Naive thymus-derived CD4-positive, alpha-beta T cell (primary cell): ENCODE measurements at regions of chr1 and their contacts with region 1.

Region 1: DNA sequence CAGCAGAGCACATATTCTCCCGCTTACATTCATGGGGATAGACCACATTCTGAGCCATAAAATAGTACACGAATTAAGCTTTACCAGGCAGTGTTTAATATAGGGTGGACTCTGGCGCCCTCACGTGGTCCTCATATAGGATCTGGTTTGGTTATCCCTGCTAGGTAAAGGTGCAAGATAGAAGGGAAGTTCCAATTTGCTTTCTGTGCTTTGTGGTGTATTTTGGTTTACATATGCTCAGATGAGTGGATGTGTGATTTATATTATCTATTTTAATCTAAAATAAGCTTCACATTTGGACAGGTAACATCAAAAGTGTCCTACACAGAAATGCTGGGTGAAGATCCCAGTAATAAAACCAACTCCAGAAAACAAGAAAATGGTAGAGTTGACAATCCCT is 3.6 kb downstream of the CR1 start:
- DNase-seq: peak; percentile 29 to 78 (median 65)
- ATAC-seq: peak; percentile 79
- H3K4me3 ChIP-seq: no peak overlapping the region
- H3K4me3 Mint-ChIP-seq: no peak overlapping the region
- H3K27ac ChIP-seq: no peak overlapping the region
- H3K27ac Mint-ChIP-seq: peak overlapping the region in 1 of 9 donors; percentile 59
- H3K4me1 ChIP-seq: peaks cover 0 to 6% of the 10 kb centered on the region in 2 donors
- H3K4me1 Mint-ChIP-seq: peaks cover 6 to 17% (median 11%) of the 10 kb centered on the region in 7 donors
- H3K27me3 ChIP-seq: no peaks in the 10 kb centered on the region
- H3K27me3 Mint-ChIP-seq: peaks cover 5 to 60% (median 23%) of the 10 kb centered on the region in 5 donors

Region 2: GRCh38 chr1:206635080-206635977 is 864.2 kb before region 1 on chr1 and contains the start of gene DYRK3:
- CTCF ChIA-PET with region 1: no interaction called
- POLR2A ChIA-PET with region 1: no interaction called
- intact Hi-C with region 1: loop called in 1 of 2 experiments (anchors 1 kb)
- DNase-seq: peak; percentile 71 to 98 (median 80)
- ATAC-seq: peak; percentile 97
- H3K4me3 ChIP-seq: peak within 1 kb of the TSS; percentile 67
- H3K4me3 Mint-ChIP-seq: peak within 1 kb of the TSS; percentile 85 to 96 (median 90)
- H3K27ac ChIP-seq: peak within 1 kb of the TSS; percentile 57
- H3K27ac Mint-ChIP-seq: peak within 1 kb of the TSS; percentile 64 to 93 (median 85)
- H3K4me1 ChIP-seq: peaks cover 8 to 16% of the 10 kb centered on the region in 2 donors
- H3K4me1 Mint-ChIP-seq: peaks cover 14 to 29% (median 18%) of the 10 kb centered on the region in 7 donors
- H3K27me3 ChIP-seq: no peaks in the 10 kb centered on the region
- H3K27me3 Mint-ChIP-seq: peaks cover 7 to 13% (median 9%) of the 10 kb centered on the region in 5 donors
- total RNA-seq, gene DYRK3: 0.22 to 8.2 (median 0.69) TPM

Region 3: GRCh38 chr1:207077470-207078377 is 421.8 kb before region 1 on chr1:
- CTCF ChIA-PET with region 1: interaction called, 26 read pairs
- POLR2A ChIA-PET with region 1: no interaction called
- intact Hi-C with region 1: loop called in 1 of 2 experiments (anchors 2 kb)
- DNase-seq: peak; percentile 21 to 85 (median 78)
- ATAC-seq: peak; percentile 98
- H3K4me3 ChIP-seq: no peak overlapping the region
- H3K4me3 Mint-ChIP-seq: no peak overlapping the region
- H3K27ac ChIP-seq: no peak overlapping the region
- H3K27ac Mint-ChIP-seq: peak overlapping the region in 3 of 9 donors; percentile 5 to 63 (median 28)
- H3K4me1 ChIP-seq: no peaks in the 10 kb centered on the region
- H3K4me1 Mint-ChIP-seq: peaks cover 0 to 14% (median 5%) of the 10 kb centered on the region in 7 donors
- H3K27me3 ChIP-seq: no peaks in the 10 kb centered on the region
- H3K27me3 Mint-ChIP-seq: peaks cover 0 to 52% (median 0%) of the 10 kb centered on the region in 5 donors

Region 4: DNA sequence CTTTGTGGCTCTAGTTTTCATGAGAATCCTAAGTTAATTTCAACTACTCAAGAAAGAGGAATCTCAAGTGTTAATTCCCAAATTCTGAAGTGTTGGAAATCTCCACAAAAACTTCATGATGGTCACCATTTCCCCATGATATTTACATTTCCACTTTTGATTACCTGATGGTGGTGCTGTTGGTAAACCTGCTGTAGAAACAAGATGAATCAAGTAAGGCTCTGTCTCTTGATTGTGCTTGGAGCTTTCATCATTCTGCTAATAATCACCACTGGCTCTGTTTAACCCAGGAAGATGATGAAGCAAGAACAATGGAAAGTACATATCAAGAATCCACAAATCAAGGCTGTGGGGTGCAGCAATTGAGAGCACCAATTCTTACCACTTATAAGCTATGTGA is 317.7 kb before region 1 on chr1:
- CTCF ChIA-PET with region 1: interaction called, 3 read pairs
- POLR2A ChIA-PET with region 1: no interaction called
- intact Hi-C with region 1: loop called (anchors 1 to 2 kb)
- DNase-seq: peak in 5 of 9 donors; percentile 5 to 35 (median 10)
- ATAC-seq: no peak
- H3K4me3 ChIP-seq: no peak overlapping the region
- H3K4me3 Mint-ChIP-seq: no peak overlapping the region
- H3K27ac ChIP-seq: no peak overlapping the region
- H3K27ac Mint-ChIP-seq: no peak overlapping the region
- H3K4me1 ChIP-seq: no peaks in the 10 kb centered on the region
- H3K4me1 Mint-ChIP-seq: peaks cover 0 to 5% (median 0%) of the 10 kb centered on the region in 7 donors
- H3K27me3 ChIP-seq: no peaks in the 10 kb centered on the region
- H3K27me3 Mint-ChIP-seq: peaks cover 0 to 39% (median 9%) of the 10 kb centered on the region in 5 donors

Region 5: GRCh38 chr1:207404849-207405525 is 94.6 kb before region 1 on chr1:
- CTCF ChIA-PET with region 1: interaction called, 39 read pairs
- POLR2A ChIA-PET with region 1: no interaction called
- intact Hi-C with region 1: loop called (anchors 1 kb)
- DNase-seq: peak in 7 of 9 donors; percentile 25 to 69 (median 56)
- ATAC-seq: peak; percentile 89
- H3K4me3 ChIP-seq: no peak overlapping the region
- H3K4me3 Mint-ChIP-seq: no peak overlapping the region
- H3K27ac ChIP-seq: no peak overlapping the region
- H3K27ac Mint-ChIP-seq: no peak overlapping the region
- H3K4me1 ChIP-seq: no peaks in the 10 kb centered on the region
- H3K4me1 Mint-ChIP-seq: peaks cover 0 to 13% (median 0%) of the 10 kb centered on the region in 7 donors
- H3K27me3 ChIP-seq: no peaks in the 10 kb centered on the region
- H3K27me3 Mint-ChIP-seq: peaks cover 0 to 3% (median 0%) of the 10 kb centered on the region in 5 donors

Region 6: GRCh38 chr1:207454046-207454964 is 45.3 kb before region 1 on chr1 and contains the start of gene CR2:
- CTCF ChIA-PET with region 1: interaction called, 43 read pairs
- POLR2A ChIA-PET with region 1: interaction called, 4 read pairs
- intact Hi-C with region 1: loop called in 1 of 2 experiments (anchors 1 kb)
- DNase-seq: peak; percentile 15 to 57 (median 41)
- ATAC-seq: peak; percentile 73
- H3K4me3 ChIP-seq: peak within 1 kb of the TSS; percentile 53
- H3K4me3 Mint-ChIP-seq: peak within 1 kb of the TSS in 8 of 10 donors; percentile 50 to 90 (median 82)
- H3K27ac ChIP-seq: peak within 1 kb of the TSS; percentile 48
- H3K27ac Mint-ChIP-seq: peak within 1 kb of the TSS in 6 of 9 donors; percentile 22 to 81 (median 67)
- H3K4me1 ChIP-seq: peaks cover 9 to 35% of the 10 kb centered on the region in 2 donors
- H3K4me1 Mint-ChIP-seq: peaks cover 5 to 16% (median 6%) of the 10 kb centered on the region in 7 donors
- H3K27me3 ChIP-seq: peaks cover 0 to 7% of the 10 kb centered on the region in 2 donors
- H3K27me3 Mint-ChIP-seq: peaks cover 0 to 37% (median 30%) of the 10 kb centered on the region in 5 donors
- total RNA-seq, gene CR2: 2.6 to 13.1 (median 3.4) TPM in 4 of 5 experiments, not detected in the other

Region 7: GRCh38 chr1:207486198-207486597 is 13.4 kb before region 1 on chr1:
- CTCF ChIA-PET with region 1: no interaction called
- POLR2A ChIA-PET with region 1: no interaction called
- intact Hi-C with region 1: loop called in 1 of 2 experiments (anchors 1 kb)
- DNase-seq: no peak
- ATAC-seq: no peak
- H3K4me3 ChIP-seq: no peak overlapping the region
- H3K4me3 Mint-ChIP-seq: no peak overlapping the region
- H3K27ac ChIP-seq: no peak overlapping the region
- H3K27ac Mint-ChIP-seq: no peak overlapping the region
- H3K4me1 ChIP-seq: no peaks in the 10 kb centered on the region
- H3K4me1 Mint-ChIP-seq: peaks cover 0 to 6% (median 0%) of the 10 kb centered on the region in 7 donors
- H3K27me3 ChIP-seq: peaks cover 0 to 3% of the 10 kb centered on the region in 2 donors
- H3K27me3 Mint-ChIP-seq: peaks cover 0 to 18% (median 0%) of the 10 kb centered on the region in 5 donors

Region 8: DNA sequence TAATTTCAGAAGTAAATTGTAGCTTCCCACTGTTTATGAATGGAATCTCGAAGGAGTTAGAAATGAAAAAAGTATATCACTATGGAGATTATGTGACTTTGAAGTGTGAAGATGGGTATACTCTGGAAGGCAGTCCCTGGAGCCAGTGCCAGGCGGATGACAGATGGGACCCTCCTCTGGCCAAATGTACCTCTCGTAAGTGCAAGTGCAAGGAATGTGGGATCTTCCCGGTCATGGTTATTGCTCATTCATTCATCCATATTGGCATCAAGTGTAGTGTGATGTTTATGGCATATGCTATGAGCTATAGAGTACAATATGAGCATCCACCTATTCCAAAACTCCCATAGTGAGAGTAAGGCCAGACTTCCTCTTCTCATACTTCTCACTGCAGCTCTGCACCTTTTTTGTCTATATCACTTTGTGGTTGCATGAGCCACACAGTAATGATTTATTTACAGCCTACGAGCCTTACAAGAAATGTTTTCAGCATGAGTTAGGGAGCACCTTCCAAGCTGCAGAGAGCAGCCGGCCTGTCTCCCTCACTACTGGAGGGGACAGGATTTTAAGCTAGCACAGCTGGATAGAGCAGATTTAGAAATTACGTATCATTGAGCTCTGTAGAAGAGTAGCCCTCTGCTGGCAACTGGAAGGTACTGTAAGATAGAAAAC is 120.4 kb after region 1 on chr1:
- CTCF ChIA-PET with region 1: no interaction called
- POLR2A ChIA-PET with region 1: no interaction called
- intact Hi-C with region 1: no loop called
- DNase-seq: peak in 6 of 9 donors; percentile 5 to 47 (median 38)
- ATAC-seq: peak; percentile 92
- H3K4me3 ChIP-seq: no peak overlapping the region
- H3K4me3 Mint-ChIP-seq: no peak overlapping the region
- H3K27ac ChIP-seq: no peak overlapping the region
- H3K27ac Mint-ChIP-seq: no peak overlapping the region
- H3K4me1 ChIP-seq: peaks cover 0 to 3% of the 10 kb centered on the region in 2 donors
- H3K4me1 Mint-ChIP-seq: peaks cover 0 to 6% (median 0%) of the 10 kb centered on the region in 7 donors
- H3K27me3 ChIP-seq: no peaks in the 10 kb centered on the region
- H3K27me3 Mint-ChIP-seq: peaks cover 0 to 18% (median 6%) of the 10 kb centered on the region in 5 donors